Activated B cell treated with CpG ODN at 0.5 μM for 24 hours (primary cell): ENCODE measurements at regions of chr12 and their contacts with region 1.

Region 1: DNA sequence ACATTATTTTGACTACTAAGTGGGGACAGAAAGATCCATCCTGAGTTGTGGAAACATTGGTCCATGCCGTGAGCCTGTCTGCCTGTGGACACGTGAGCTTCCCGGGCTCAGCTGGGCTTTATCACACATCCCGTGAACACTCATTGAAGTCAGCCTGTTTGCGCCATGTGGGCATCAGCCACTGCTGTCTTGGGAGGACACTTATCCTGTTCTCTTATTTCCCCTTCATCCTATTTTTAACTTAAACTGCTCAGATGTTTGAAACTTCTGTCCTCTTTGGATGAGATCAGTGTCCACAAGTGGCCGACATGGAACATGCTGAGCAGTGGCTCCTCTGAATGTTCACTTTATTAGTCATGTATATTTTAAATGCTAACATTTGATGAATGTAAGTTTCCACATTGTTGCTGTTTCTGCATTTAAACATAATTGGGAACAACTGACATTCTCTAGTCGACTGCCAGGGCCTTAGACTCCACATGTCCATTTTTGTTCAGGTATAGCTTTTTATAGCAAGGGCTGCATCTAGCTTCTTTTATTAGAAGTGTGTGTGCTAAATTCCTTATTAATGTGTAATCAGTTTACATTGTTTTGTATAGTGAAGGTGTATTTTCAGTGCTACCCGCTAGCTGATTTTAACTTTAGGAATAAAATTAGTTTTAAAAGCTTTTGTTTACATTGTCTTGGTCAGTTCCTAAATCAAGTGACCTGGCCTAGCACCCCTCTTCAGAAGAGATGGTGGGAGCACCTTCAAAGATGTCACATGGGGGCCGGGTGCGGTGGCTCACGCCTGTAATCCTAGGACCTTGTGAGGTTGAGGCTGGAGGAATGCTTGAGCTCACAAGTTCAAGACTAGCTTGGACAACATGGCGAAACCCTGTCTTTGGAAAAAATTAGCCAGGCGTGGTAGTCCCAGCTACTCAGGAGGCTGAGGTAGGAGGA is 24.0 kb downstream of the RNF34 start:
- DNase-seq: no peak
- ATAC-seq: no peak
- H3K4me3 Mint-ChIP-seq: no peak overlapping the region
- H3K27ac Mint-ChIP-seq: peak overlapping the region; percentile 50
- H3K4me1 Mint-ChIP-seq: peaks cover 28% of the 10 kb centered on the region
- H3K27me3 Mint-ChIP-seq: no peaks in the 10 kb centered on the region
- CTCF ChIP-seq: no peak

Region 2: GRCh38 chr12:121223292-121224285 is 200.4 kb before region 1 on chr12:
- CTCF ChIA-PET with region 1: no interaction called
- POLR2A ChIA-PET with region 1: no interaction called
- intact Hi-C with region 1: no loop called
- DNase-seq: no peak
- ATAC-seq: peak; percentile 39
- H3K4me3 Mint-ChIP-seq: no peak overlapping the region
- H3K27ac Mint-ChIP-seq: peak overlapping the region; percentile 83
- H3K4me1 Mint-ChIP-seq: peaks cover 34% of the 10 kb centered on the region
- H3K27me3 Mint-ChIP-seq: no peaks in the 10 kb centered on the region
- CTCF ChIP-seq: no peak

Region 3: GRCh38 chr12:121351820-121352681 is 71.9 kb before region 1 on chr12 and contains the start of gene ANAPC5:
- CTCF ChIA-PET with region 1: no interaction called
- POLR2A ChIA-PET with region 1: interaction called, 11 read pairs
- intact Hi-C with region 1: loop called (anchors 5 kb)
- DNase-seq: peak; percentile 73
- ATAC-seq: peak; percentile 99
- H3K4me3 Mint-ChIP-seq: peak within 1 kb of the TSS; percentile 94
- H3K27ac Mint-ChIP-seq: peak within 1 kb of the TSS; percentile 91
- H3K4me1 Mint-ChIP-seq: peaks cover 28% of the 10 kb centered on the region
- H3K27me3 Mint-ChIP-seq: no peaks in the 10 kb centered on the region
- CTCF ChIP-seq: no peak
- total RNA-seq, gene ANAPC5: 116 and 143 TPM in 2 replicates

Region 4: DNA sequence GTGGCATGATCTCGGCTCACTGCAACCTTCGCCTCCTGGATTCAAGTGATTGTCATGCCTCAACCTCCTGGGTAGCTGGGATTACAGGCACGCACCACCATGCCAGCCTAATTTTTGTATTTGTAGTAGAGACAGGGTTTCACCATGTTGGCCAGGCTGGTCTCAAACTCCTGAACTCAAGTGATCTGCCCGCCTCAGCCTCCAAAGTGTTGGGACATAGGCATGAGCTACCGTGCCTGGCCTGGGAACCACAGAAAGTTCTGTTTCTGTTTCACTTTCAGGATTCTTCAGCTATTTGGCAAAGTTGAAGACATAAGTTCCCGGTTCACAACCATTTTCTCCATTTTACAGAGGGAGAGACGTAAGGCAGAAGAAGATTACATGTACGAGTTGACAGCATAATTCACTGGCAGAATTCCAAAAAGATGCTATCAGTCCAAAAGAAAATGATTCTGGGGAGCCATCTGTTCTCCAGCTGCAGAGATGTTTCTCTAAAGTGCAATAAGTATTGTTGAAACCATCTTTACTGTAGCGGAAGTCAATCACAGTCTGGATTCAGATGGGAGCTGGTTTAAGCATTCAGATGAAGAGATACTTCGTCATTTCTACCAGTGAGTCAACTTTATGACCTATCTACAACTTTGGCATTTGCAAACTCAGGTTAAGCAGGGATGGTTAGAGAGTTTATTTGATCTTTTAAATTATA is 32.2 kb before region 1 on chr12:
- CTCF ChIA-PET with region 1: no interaction called
- POLR2A ChIA-PET with region 1: interaction called, 15 read pairs
- intact Hi-C with region 1: no loop called
- DNase-seq: no peak
- ATAC-seq: peak; percentile 60
- H3K4me3 Mint-ChIP-seq: peak overlapping the region; percentile 3
- H3K27ac Mint-ChIP-seq: no peak overlapping the region
- H3K4me1 Mint-ChIP-seq: peaks cover 9% of the 10 kb centered on the region
- H3K27me3 Mint-ChIP-seq: no peaks in the 10 kb centered on the region
- CTCF ChIP-seq: no peak